Ovary (tissue), 10 donors: ENCODE measurements at regions of chr4 and their contacts with region 1.

Region 1: GRCh38 chr4:71239365-71239764 is 99.5 kb upstream of the SLC4A4 start:
- DNase-seq: no peak
- H3K4me3 ChIP-seq: no peak overlapping the region
- H3K27ac ChIP-seq: no peak overlapping the region
- H3K4me1 ChIP-seq: no peaks in the 10 kb centered on the region
- H3K27me3 ChIP-seq: no peaks in the 10 kb centered on the region
- CTCF ChIP-seq: no peak
- EP300 ChIP-seq: no peak
- POLR2A ChIP-seq: no peak

Region 2: DNA sequence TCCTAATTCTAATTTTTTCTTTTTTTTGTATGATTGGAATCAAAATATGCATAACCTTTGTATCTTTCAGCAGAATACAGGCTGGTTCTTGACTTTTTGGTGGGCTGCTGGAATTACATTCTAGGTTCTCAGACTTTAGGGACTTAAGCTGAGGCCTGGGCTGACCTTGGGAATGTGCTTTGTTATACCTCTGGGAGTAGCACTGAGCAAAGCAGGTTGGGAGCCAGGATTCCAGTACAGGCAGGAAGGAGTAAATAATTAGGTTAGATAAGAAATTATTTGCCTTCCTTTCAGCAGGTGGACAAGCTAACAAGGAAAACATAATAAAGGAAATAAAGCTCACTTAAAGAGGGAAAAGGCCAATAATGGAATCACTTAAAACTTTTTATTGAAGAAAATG is 49.5 kb after region 1 on chr4:
- intact Hi-C with region 1: loop called in 1 of 4 experiments (anchors 2 kb)
- DNase-seq: no peak
- H3K4me3 ChIP-seq: no peak overlapping the region
- H3K27ac ChIP-seq: no peak overlapping the region
- H3K4me1 ChIP-seq: no peaks in the 10 kb centered on the region
- H3K27me3 ChIP-seq: no peaks in the 10 kb centered on the region
- CTCF ChIP-seq: no peak
- EP300 ChIP-seq: no peak
- POLR2A ChIP-seq: no peak